ENCODE measurements at regions of chr14 and their contacts with region 1.

Region 1: DNA sequence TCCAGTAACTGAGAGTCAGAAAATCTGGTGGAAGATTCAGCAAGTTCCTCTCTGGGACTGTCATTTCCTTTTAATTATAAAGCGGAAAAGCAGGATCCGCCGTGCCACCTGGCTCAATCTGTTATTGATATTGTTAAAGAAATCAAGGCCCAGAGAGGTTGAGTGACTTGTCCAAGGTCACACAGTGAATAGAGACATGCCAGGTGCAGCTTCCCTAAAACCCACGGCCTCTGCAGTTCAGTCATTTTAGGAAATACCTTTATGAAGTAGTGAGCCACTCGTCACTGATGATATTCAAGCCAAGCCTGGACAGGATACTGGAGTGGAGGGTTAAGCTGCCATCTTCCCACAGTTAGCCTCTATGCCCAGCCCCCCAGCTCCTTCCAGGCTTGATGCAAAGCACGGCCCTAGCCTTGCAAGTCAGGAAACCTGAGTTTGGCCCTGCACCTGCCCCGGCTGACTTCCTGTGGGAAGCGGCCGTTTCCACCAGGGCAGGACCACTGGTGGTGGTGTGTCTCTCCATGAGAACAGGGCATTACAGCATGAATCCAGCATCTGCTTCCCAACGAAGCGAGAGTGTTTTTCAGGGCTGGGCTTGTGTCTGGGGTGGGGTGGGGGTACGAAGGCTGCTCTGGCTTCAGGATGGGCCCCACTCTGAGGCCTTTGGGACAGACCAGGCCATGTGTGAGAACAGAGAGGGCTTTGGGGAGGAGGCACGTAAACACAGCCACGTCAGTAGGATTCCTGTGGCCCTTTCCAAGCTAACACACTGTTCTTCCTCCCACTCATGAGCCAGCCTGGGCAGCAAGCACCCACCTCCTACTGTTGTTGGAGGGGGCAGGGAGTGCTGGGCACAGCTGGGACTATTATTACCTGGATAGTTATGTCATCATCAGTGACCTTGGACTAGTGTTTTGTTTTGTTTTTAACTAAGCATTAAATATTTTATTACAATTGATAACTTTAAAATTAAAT is 5.0 kb downstream of the CHGA start:
- DNase-seq: no peak
- H3K4me3 ChIP-seq: no peak overlapping the region
- H3K4me3 Mint-ChIP-seq: no peak overlapping the region
- H3K27ac ChIP-seq: no peak overlapping the region
- H3K27ac Mint-ChIP-seq: no peak overlapping the region
- H3K4me1 ChIP-seq: no peaks in the 10 kb centered on the region
- H3K4me1 Mint-ChIP-seq: peaks cover 0 to 3% (median 0%) of the 10 kb centered on the region in 4 donors
- H3K27me3 ChIP-seq: no peaks in the 10 kb centered on the region
- H3K27me3 Mint-ChIP-seq: peaks cover 5 to 15% of the 10 kb centered on the region in 2 donors

Region 2: DNA sequence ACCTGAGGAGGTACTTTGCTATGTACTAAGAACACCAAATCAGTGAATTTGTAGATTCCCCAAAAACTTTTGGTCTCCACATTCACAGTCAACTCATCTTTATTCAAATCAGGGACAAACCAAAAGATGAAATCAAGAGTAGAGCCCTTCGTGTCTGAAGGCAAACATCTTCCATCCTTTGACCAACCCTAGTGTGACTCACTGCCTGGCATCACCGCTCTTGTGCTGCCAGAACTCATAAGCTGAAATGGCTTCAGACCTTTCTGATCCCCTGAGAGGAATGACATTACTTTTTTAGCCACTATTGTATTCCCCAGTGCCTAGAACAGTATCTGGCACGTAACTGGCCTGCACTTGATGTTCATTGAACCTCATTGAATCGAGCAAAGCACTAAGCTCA is 83.7 kb before region 1 on chr14:
- CTCF ChIA-PET with region 1: no interaction called
- POLR2A ChIA-PET with region 1: no interaction called
- intact Hi-C with region 1: no loop called
- DNase-seq: no peak
- H3K4me3 ChIP-seq: no peak overlapping the region
- H3K4me3 Mint-ChIP-seq: no peak overlapping the region
- H3K27ac ChIP-seq: no peak overlapping the region
- H3K27ac Mint-ChIP-seq: peak overlapping the region in 2 of 7 donors; percentile 13 to 59
- H3K4me1 ChIP-seq: peaks cover 33% of the 10 kb centered on the region
- H3K4me1 Mint-ChIP-seq: peaks cover 20 to 33% (median 27%) of the 10 kb centered on the region in 4 donors
- H3K27me3 ChIP-seq: no peaks in the 10 kb centered on the region
- H3K27me3 Mint-ChIP-seq: no peaks in the 10 kb centered on the region

Region 3: DNA sequence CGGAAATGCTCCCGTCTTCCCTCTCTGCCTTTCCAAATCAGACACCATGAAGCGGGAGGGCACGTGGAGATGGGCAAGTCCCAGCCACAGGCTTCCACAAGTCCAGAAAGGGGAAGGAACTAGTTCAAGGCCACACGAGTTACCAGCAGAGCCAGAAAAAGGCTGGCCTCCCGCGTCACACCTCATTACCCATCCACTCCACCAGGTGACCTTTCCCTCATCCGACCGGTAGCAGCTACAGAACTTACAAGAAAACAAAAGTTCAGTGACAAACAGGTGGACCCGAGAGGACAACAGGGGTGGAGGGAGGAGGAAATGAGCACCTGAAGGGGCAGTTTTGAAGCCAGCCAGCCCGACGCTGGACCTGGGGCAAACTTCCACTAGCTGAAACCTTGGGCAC is 41.9 kb after region 1 on chr14:
- CTCF ChIA-PET with region 1: no interaction called
- POLR2A ChIA-PET with region 1: no interaction called
- intact Hi-C with region 1: loop called (anchors 2 kb)
- DNase-seq: no peak
- H3K4me3 ChIP-seq: no peak overlapping the region
- H3K4me3 Mint-ChIP-seq: no peak overlapping the region
- H3K27ac ChIP-seq: no peak overlapping the region
- H3K27ac Mint-ChIP-seq: no peak overlapping the region
- H3K4me1 ChIP-seq: no peaks in the 10 kb centered on the region
- H3K4me1 Mint-ChIP-seq: peaks cover 0 to 10% (median 2%) of the 10 kb centered on the region in 4 donors
- H3K27me3 ChIP-seq: no peaks in the 10 kb centered on the region
- H3K27me3 Mint-ChIP-seq: no peaks in the 10 kb centered on the region